HEK293 (cell line): ENCODE measurements at regions of chr22 and their contacts with region 1.

Region 1: GRCh38 chr22:33095661-33096060 is 37.5 kb upstream of the SYN3 start:
- H3K4me3 ChIP-seq: no peak overlapping the region
- H3K27ac ChIP-seq: no peak overlapping the region
- H3K4me1 ChIP-seq: no peaks in the 10 kb centered on the region
- CTCF ChIP-seq: no peak

Region 2: GRCh38 chr22:33006220-33006954 is 89.3 kb before region 1 on chr22:
- CTCF ChIA-PET with region 1: no interaction called
- POLR2A ChIA-PET with region 1: no interaction called
- H3K4me3 ChIP-seq: no peak overlapping the region
- H3K27ac ChIP-seq: no peak overlapping the region
- H3K4me1 ChIP-seq: 0 out of 2 replicates have a peak, but pooled peaks cover 4% of the 10 kb centered on the region
- CTCF ChIP-seq: no peak

Region 3: DNA sequence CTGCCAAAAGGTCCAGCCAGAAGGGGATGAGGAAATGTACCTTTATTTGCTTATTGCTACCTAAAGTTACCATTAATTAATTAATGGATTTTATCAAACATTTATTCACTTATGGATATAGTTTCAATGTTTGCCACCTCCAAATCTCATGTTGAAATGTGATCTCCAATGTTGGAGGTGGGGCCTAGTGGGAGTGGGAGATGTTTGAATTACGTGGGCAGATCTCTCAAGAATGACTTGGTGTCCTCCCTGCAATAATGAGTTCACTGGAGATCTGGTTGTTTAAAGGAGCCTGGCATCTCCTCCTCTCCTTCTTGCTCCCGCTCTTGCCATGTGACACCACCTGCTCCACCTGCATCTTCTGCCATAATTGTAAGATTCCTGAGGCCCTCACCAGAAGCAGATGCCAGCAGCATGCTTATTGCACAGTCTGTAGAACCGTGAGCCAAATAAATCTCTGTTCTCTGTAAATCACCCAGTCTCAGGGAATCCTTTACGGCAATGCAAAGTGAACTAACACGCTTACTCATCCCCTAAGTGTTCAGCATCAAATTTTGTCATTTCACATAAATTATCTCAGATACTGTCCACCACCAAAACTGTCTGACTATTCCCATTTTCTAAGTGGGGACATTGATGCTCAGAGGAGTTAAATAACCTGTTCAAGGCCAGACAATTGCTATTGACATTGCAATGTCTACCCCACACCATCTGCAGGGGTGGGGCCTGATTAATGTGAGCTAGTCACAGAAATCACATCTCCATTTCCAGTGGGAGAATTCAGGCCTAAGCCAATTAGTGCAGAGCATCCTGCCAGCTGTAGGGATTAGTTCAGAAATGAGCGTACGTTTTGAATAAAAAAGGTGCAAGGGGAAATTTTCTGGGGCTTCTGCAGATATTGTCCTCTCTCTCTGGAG is 14.1 kb after region 1 on chr22:
- CTCF ChIA-PET with region 1: interaction called, 11 read pairs
- POLR2A ChIA-PET with region 1: no interaction called
- H3K4me3 ChIP-seq: no peak overlapping the region
- H3K27ac ChIP-seq: no peak overlapping the region
- H3K4me1 ChIP-seq: peaks cover 4% of the 10 kb centered on the region
- CTCF ChIP-seq: no peak

Region 4: GRCh38 chr22:33240888-33241475 is 145.3 kb after region 1 on chr22:
- CTCF ChIA-PET with region 1: no interaction called
- POLR2A ChIA-PET with region 1: no interaction called
- H3K4me3 ChIP-seq: no peak overlapping the region
- H3K27ac ChIP-seq: no peak overlapping the region
- H3K4me1 ChIP-seq: no peaks in the 10 kb centered on the region
- CTCF ChIP-seq: no peak